ENCODE measurements at regions of chr7 and their contacts with region 1.

Region 1: DNA sequence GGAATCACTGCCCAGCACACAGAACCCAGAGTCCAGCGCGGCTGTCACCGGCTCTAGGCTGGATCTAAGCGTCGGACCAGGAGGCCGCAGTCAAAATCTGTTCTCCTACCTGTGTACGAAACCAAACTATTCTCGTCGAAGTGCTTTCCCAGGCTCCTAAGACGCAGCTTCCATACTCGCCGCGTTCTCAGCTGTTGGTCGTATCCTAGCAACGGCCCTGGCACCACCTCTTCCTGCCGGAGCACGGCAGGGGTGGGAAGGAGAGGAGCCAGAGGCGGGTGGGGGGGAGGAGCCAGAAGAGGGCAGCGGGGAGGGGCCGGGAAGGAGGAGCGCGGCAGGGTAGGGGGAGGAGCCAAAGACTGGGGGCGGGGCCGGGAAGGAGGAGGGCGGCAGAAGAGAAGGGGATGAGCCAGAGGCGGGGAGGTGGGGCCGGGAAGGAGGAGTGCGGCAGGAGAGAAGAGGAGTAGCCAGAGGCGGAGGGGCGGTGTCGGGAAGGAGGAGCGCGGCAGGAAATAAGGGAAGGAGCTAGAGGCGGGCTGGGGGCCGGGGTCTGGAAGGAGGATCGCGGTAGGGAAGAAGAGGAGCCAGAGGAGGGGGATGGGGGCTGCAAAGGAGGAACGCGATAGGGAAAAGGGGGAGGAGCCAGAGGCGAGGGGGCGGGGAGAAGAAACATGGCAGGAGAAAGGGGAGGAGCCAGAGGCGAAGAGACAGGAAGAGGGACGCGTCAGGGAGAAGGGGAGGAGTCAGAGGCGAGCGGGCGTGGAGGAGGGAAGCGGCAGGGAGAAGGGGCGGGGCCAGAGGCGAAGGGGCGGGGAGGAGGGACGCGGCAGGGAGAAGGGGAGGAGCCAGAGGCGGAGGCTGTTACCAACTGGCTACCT is at the start of gene IQUB:
- H3K4me3 Mint-ChIP-seq: peak within 1 kb of the TSS; percentile 95
- H3K27ac Mint-ChIP-seq: peak within 1 kb of the TSS; percentile 99
- H3K4me1 Mint-ChIP-seq: peaks cover 17% of the 10 kb centered on the region
- H3K27me3 Mint-ChIP-seq: peaks cover 36% of the 10 kb centered on the region

Region 2: GRCh38 chr7:123472750-123473445 is 61.7 kb before region 1 on chr7:
- intact Hi-C with region 1: no loop called
- H3K4me3 Mint-ChIP-seq: no peak overlapping the region
- H3K27ac Mint-ChIP-seq: no peak overlapping the region
- H3K4me1 Mint-ChIP-seq: no peaks in the 10 kb centered on the region
- H3K27me3 Mint-ChIP-seq: no peaks in the 10 kb centered on the region

Region 3: GRCh38 chr7:123557398-123558288 is 23.0 kb after region 1 on chr7 and contains the start of gene NDUFA5:
- intact Hi-C with region 1: loop called (anchors 1 kb)
- H3K4me3 Mint-ChIP-seq: no peak within 1 kb of the TSS
- H3K27ac Mint-ChIP-seq: no peak within 1 kb of the TSS
- H3K4me1 Mint-ChIP-seq: peaks cover 6% of the 10 kb centered on the region
- H3K27me3 Mint-ChIP-seq: peaks cover 16% of the 10 kb centered on the region

Region 4: DNA sequence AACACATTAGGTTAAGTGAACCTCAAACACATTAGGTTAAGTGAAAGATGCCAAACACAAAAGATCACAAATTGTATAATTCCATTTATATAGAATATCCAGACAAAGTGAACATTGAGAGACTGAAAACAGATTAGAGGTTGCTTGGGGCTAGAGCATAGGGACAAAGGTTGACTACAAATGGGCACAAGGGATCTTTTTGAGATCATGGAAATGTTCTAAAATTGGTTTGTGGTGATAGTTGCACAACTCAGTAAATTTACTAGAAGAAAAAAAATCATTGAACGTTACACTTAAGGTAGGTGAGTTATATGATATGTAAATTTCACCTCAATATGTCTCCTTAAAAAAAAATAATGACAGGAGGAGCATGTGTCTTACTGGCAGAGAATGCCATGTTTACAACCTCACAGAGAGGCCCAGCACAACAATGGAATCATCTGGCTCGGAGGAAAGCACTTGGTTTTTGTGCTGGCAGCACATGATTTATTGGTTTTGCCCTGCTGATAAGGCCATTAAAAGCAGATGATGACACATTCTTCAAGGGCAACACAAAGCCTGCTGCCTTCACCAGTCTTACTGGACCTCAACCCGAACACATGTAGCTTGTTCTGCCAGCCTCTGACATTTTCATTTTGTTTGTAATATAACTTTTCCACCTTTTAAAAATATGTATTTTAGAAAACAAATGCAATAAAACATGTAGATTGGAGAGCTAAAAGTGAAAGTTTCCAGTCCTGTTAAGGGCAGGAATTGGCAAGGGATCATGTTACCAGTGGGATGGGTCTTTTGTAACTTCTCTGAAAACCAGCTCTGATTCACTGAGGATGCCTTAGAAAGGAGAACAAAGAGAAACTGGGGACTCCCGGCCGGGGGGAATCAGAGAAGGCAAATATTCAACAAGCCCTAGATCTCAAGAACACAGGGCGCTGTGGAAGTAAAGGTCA is 109.1 kb after region 1 on chr7:
- intact Hi-C with region 1: no loop called
- H3K4me3 Mint-ChIP-seq: no peak overlapping the region
- H3K27ac Mint-ChIP-seq: no peak overlapping the region
- H3K4me1 Mint-ChIP-seq: no peaks in the 10 kb centered on the region
- H3K27me3 Mint-ChIP-seq: peaks cover 10% of the 10 kb centered on the region

Region 5: DNA sequence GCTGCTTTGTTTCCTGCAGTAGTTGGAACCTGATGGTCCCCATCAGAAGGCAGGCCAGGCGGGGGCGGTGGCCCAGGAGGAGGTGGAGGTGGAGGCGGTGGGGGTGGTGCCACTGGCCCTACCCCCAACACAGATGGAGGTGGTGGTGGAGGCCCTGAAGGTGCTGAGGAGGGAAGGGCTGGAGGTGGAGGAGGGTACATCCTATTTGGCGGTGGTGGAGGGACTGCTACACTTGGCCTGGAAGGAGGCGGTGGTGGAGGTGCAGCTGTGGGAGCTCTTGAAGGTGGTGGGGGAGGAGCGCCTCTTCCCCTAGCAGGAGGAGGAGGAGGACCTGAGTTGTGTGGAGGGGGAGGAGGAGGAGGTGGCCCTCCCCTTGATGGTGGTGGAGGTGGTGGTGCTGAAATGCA is 157.9 kb after region 1 on chr7:
- intact Hi-C with region 1: no loop called
- H3K4me3 Mint-ChIP-seq: no peak overlapping the region
- H3K27ac Mint-ChIP-seq: no peak overlapping the region
- H3K4me1 Mint-ChIP-seq: no peaks in the 10 kb centered on the region
- H3K27me3 Mint-ChIP-seq: no peaks in the 10 kb centered on the region

Region 6: DNA sequence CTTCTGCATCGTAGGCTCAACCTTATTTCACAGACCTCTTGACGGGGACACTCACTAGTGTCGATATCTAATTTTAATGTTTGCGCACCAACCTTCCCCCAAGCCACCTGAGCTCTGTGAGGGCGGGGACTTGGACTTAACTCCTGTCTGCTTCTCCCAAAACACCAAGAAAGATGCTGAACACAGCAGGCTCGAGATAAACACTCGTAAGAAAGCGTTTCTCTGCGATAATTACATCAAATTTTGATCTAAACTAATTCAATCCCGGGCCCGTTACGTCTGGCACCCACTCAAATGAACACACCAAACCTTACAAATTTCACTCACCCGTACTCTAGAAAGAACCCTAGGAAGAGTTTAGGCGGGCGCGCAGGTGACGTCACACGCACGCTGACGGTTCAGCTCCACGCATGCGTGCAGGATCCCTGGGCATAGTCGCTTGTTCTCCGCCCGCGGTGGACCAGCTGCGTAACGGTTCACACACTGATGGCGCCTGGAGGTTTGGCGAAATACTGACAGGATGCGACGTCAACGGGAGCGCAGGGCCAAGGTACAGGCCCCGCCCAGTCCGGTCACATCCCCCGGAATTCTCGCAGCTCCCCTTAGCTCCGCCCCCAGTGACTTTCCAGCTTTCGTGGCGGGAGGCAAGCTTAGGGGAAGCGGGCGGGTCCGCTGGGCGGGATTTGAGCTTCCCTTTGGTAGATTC is 1395.0 kb after region 1 on chr7 and contains the start of gene POT1:
- intact Hi-C with region 1: loop called (anchors 5 kb)
- H3K4me3 Mint-ChIP-seq: peak within 1 kb of the TSS; percentile 89
- H3K27ac Mint-ChIP-seq: peak within 1 kb of the TSS; percentile 92
- H3K4me1 Mint-ChIP-seq: peaks cover 20% of the 10 kb centered on the region
- H3K27me3 Mint-ChIP-seq: peaks cover 15% of the 10 kb centered on the region